Psoas muscle (tissue), 8 donors: ENCODE measurements at regions of chr6 and their contacts with region 1.

Region 1: DNA sequence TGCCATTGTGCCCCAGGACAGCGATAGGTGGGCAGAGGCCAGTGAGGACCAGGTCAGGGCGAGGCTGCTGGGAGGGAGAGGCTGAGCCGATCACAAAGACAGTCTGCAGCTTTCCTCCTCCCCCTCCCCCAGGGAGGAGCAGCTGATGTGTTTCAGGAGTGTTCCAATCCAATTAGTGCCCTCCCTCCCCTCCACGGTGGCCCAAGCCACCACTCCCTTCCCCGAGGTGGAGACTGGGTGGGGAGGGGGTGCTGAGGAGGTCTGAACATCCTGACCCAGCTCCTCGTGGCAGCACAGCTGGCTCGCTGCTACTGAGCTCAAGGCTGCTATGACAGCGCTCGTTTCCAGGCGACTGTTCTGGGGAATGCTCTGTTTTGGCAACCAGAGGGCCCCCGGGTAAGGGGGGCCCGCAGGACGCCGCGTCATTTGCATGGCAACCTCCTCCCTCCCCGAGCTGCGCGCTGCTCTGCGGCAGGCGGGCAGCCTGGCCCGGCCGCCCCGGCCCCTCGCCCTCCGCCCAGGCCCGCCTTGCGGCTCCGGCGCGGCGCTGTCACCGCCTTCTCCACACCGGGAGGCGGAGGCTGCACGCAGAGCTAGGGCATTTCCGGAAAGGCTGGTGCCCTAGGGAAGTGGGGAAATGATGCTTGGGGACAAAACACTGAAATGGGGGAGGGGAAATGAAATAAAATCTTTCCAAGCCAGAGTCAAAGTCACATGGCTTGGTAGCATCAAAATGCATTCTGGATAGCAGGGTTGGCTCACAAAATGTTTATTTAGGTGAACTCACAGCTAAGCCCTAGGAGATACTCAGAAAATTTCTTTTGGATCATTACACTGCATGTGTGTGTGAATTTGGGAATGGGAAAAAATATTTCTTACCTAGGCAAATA is 67.4 kb upstream of the PIM1 start:
- DNase-seq: peak; percentile 87 to 93
- ATAC-seq: peak; percentile 73 to 80 (median 76)
- H3K4me3 ChIP-seq: peak overlapping the region; percentile 58
- H3K27ac ChIP-seq: peak overlapping the region; percentile 95
- H3K4me1 ChIP-seq: peaks cover 28% of the 10 kb centered on the region
- H3K27me3 ChIP-seq: no peaks in the 10 kb centered on the region
- CTCF ChIP-seq: no peak

Region 2: DNA sequence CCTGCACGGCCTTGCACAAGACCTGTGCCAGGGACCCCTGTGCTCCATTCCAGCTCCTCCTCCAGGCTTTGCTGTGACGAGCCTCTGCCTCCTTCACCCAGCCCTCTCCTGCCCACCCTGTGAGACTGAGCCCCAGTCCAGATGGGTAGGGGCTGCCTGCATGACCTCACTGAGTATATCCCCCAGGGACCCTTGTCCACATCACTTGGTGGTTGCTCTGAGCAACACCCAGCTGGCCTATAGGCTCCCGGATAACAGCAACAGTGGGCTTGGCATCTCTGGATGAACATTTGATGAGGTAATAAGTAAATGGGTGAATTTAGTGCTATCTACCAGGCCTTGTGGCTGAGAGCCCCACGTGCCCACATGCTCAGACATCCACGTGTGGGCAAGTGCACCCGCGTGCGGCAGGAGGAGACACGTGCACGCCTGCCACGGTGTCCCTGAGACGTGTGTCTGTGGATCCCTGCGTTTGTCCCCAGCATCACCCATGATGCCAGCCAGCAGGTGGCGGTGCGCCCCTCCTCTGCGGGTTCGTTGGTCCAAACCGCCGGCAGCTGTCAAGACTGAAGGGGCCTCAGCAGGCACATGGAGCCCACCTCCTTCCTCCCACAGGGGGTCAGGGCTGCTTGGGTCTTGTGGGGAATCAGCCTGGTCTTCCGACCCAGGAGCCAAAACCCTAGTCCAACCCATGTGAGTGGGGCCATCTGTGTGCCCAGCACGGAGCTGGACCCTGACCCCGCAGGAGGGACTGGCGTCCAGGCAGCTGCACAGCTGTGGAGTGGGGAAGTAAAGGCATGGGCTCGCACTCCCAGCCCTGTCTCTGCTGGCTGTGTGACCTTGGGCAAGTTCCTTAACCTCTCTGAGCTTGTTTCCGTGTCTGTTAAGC is 51.1 kb before region 1 on chr6:
- intact Hi-C with region 1: loop called (anchors 2 to 5 kb)
- DNase-seq: peak; percentile 92 to 95
- ATAC-seq: peak; percentile 90 to 97 (median 91)
- H3K4me3 ChIP-seq: no peak overlapping the region
- H3K27ac ChIP-seq: peak overlapping the region; percentile 51
- H3K4me1 ChIP-seq: peaks cover 11% of the 10 kb centered on the region
- H3K27me3 ChIP-seq: no peaks in the 10 kb centered on the region
- CTCF ChIP-seq: peak; percentile 93

Region 3: DNA sequence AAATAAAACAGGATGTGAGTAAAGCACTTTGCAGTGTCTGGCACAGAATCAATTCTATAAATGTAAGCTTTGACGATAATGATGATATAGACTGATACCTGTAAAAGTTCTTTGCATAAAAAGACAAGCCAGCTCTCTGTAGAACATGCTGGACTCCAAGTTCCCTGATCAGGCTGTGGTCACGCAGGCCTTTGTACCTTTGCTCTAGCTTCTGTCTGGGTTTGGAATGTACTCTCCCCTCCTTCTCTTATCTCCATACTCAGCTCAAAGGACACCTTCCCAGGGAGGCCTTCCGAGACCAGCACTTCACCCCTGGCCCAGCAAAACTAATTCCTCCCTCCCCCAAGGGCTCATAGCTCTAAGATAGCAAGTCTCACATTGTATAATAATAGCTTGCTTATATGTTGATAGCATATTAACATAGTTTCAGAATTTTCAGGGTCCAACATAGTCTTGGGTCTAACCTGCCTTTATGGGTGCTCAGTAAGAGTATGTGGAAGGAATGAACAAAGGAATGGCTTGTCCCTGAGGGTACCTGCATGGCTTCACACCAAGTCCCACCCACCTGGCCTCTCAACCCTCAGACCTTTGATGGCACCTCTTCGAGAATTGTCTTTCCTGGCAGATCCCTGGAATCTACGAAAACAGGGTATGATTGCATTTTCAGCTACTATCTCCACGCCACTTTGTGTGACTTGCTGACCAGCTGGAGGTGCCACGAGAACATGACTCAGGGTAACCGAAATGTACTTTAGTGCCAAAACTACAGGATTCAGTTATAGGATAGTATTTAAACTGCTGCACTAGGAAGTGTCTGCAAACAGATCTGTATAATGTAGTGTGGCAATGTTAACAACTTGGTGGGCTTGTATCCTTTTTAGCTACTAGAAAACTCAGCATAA is 25.7 kb after region 1 on chr6:
- intact Hi-C with region 1: loop called (anchors 1 to 2 kb)
- DNase-seq: no peak
- ATAC-seq: peak in 1 of 4 donors; percentile 35
- H3K4me3 ChIP-seq: no peak overlapping the region
- H3K27ac ChIP-seq: peak overlapping the region; percentile 98
- H3K4me1 ChIP-seq: peaks cover 39% of the 10 kb centered on the region
- H3K27me3 ChIP-seq: no peaks in the 10 kb centered on the region
- CTCF ChIP-seq: no peak

Region 4: GRCh38 chr6:37134606-37135191 is 32.2 kb after region 1 on chr6:
- intact Hi-C with region 1: loop called (anchors 1 to 2 kb)
- DNase-seq: peak; percentile 64 to 76
- ATAC-seq: peak; percentile 66 to 75 (median 74)
- H3K4me3 ChIP-seq: no peak overlapping the region
- H3K27ac ChIP-seq: peak overlapping the region; percentile 98
- H3K4me1 ChIP-seq: peaks cover 59% of the 10 kb centered on the region
- H3K27me3 ChIP-seq: no peaks in the 10 kb centered on the region
- CTCF ChIP-seq: no peak